PC-3 (cell line): ENCODE measurements at regions of chr5 and their contacts with region 1.

Region 1: DNA sequence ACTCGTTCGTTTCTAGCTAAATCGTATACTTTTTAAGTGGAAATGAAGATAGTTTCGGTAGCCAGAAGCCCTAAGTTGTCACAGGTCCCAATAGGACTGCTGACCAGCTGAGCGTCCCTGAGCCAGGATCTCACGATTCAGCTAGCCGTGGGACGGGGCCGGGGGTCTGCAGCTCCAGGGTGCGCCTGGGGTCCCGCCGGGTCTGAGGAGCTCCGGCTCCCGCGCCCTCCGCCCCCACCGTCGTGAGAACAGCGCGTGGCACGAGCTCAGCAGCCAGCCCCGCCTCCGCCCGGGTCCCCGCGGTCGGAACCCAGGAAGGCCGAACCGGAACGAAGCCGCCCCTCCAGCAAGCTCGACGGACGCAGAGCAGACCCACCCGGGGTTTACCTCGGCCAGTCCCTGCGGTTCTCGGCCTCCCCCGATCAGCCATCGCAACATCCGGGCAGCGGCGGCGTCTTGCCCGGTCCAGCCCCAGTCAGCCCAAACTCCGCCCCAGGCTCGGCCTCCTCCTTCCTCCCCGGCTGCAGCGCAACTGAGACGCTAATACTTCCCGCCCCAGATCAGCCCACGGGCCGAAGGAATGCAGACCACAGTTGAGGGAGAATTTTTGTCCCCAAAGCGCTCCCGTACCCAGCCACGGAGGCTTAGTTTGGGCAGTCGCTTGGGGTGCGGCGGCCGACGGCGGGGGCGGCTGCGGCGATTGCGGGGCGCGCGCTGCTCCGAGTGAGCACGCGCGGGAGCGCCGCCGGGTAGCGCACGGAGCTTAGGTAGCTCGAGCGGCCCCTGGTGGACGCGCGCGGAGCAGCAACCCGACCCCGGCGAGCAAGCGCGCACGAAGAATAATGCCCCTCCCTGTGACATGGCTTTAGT is at the start of gene WDR41:
- DNase-seq: peak; percentile 77
- ATAC-seq: peak; percentile 95
- H3K4me3 ChIP-seq: peak within 1 kb of the TSS; percentile 81
- H3K27ac ChIP-seq: peak within 1 kb of the TSS; percentile 57
- H3K4me1 ChIP-seq: peaks cover 6% of the 10 kb centered on the region; the same call in 1 of the 2 replicates
- H3K27me3 ChIP-seq: no peaks in the 10 kb centered on the region
- CTCF ChIP-seq: peak; percentile 74
- total RNA-seq, gene WDR41: 13.5 and 19.5 TPM in 2 replicates

Region 2: DNA sequence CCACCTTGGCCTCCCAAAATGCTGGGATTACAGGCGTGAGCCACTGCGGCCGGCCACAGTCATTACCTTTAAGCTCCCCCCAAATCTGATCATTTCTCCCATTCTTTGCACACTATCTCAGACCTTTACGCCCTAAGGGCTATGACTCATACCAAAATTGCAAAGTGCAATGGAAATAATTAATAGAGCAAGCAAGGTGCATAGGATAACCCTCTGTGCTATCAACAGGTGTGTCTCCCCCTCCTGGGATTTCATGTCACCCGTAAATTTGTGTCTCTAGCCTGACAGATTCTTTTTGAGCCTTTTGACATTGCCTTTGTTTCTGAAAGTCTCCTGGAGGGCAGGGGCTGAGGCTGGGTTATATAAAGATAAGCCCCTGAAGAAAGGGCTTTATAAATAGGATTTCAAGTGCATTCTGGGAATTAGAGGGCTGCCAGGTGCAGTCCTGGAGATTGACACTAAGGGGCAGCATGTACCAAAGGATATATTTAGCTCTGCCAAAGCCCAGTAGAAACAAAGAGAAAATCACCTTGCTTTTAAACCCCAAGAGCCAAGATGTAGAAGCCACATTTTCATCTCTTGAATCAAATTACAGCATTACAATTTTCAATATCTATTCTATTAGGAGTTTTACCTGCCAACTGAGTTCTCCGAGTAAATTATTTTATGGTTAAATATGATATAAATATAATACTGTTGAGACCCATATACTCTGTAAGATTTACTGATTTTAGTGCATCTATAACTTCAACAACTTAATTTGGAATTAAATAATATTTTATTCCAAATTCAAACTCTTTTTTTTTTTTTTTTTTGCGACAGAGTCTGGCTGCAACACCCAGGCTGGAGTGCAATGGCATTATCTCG is 624.0 kb before region 1 on chr5:
- CTCF ChIA-PET with region 1: no interaction called
- POLR2A ChIA-PET with region 1: no interaction called
- intact Hi-C with region 1: loop called (anchors 5 kb)
- DNase-seq: peak; percentile 75
- ATAC-seq: peak; percentile 61
- H3K4me3 ChIP-seq: no peak overlapping the region
- H3K27ac ChIP-seq: no peak overlapping the region
- H3K4me1 ChIP-seq: no peaks in the 10 kb centered on the region
- H3K27me3 ChIP-seq: no peaks in the 10 kb centered on the region
- CTCF ChIP-seq: peak; percentile 72

Region 3: DNA sequence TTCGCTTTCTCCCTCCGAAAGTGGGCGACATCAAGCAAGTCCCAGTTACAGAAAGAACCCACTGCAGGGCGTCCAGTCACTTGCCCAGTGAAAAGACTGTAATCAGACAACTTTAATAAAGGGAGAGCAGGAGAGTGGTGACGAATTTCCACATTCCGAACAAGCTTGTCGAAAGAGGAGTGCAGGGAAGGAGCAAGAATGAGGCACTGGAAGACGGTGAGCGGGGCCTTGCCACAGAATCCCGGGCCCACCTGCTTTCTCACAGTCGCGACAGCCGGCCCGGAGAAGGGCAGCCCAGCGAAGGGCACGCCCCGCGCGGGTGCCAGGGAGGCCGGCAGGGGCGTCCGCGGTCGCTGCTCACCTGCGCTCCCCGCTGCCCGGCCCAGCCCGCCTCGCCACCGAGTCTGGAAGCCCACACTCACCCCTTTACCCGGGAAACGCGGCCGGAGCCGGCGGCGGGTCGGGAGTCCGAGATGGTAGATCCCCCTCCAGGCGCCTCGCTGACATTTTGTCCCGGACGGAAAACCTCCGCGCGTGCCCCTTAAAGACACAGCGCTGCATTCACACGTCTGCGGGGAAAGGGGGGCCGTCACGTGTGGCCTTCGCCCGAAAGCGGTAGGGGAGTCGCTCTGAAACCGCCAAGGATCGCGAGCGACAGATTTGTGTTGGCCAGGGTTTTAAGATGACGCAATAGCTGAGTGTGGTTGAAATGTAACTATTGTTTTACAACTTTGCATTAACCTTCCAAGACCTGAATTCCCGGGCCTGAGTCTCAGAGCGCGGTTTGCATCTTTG is 405.1 kb before region 1 on chr5 and contains the start of gene ZBED3:
- CTCF ChIA-PET with region 1: no interaction called
- POLR2A ChIA-PET with region 1: no interaction called
- intact Hi-C with region 1: loop called (anchors 5 kb)
- DNase-seq: peak; percentile 64
- ATAC-seq: peak; percentile 78
- H3K4me3 ChIP-seq: peak within 1 kb of the TSS; percentile 93
- H3K27ac ChIP-seq: peak within 1 kb of the TSS; percentile 77
- H3K4me1 ChIP-seq: peaks cover 24% of the 10 kb centered on the region
- H3K27me3 ChIP-seq: no peaks in the 10 kb centered on the region
- CTCF ChIP-seq: 0 out of 2 replicates have a peak, but pooled peaks have one; percentile 12
- total RNA-seq, gene ZBED3: 1.3 and 9.8 TPM in 2 replicates

Region 4: GRCh38 chr5:77143998-77144836 is 347.8 kb before region 1 on chr5:
- CTCF ChIA-PET with region 1: interaction called, 4 read pairs
- POLR2A ChIA-PET with region 1: interaction called, 3 read pairs
- intact Hi-C with region 1: loop called (anchors 1 kb)
- DNase-seq: peak; percentile 65
- ATAC-seq: peak; percentile 57
- H3K4me3 ChIP-seq: no peak overlapping the region
- H3K27ac ChIP-seq: no peak overlapping the region
- H3K4me1 ChIP-seq: peaks cover 9% of the 10 kb centered on the region
- H3K27me3 ChIP-seq: no peaks in the 10 kb centered on the region
- CTCF ChIP-seq: peak; percentile 78

Region 5: DNA sequence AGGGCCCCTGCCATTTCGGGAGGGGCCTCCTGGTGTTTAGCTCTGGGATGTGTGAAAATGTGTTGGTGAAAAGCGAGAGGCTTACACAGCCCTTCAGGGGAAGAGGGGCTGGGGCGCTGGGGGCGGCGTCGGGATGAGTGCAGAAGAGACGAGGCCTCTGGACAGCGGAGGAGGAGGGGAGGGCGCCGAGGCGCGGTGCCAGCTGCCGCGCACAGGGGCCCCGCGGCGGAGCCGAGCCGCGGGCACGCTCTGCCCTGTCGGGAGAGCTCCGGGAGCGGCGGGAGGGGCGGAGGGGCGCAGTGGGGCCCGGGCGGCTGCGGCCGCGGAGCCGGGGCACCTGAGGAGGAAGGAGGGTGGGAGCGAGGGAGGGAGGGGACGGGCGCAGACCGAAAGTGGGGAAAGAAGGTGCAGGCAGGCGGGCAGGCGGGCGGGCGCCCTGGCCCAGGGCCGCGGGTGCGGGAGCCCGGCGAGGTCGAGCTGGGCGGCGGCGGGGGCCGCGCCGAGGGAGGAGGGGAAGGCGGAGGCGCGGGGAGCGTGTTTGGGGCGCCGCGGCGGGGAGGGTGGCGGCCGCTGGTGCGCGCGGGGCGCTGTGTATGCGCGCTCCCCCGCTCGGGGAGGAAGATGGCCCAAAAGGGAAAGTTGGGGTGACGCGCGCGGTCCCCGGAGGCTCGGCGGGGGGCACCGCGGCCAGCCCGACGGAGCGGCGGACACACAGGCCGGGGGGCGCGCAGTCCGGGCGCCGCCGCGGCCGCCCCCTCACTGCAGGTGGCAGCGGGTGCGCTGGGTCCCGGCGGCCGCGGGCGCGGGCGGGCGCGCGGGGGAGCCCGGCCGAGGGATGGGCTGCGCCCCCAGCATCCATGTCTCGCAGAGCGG is 281.7 kb before region 1 on chr5 and contains the start of gene PDE8B:
- CTCF ChIA-PET with region 1: no interaction called
- POLR2A ChIA-PET with region 1: no interaction called
- intact Hi-C with region 1: loop called (anchors 5 kb)
- DNase-seq: no peak
- ATAC-seq: no peak
- H3K4me3 ChIP-seq: peak within 1 kb of the TSS; percentile 75
- H3K27ac ChIP-seq: no peak within 1 kb of the TSS
- H3K4me1 ChIP-seq: peaks cover 4% of the 10 kb centered on the region; the same call in 1 of the 2 replicates
- H3K27me3 ChIP-seq: peaks cover 22% of the 10 kb centered on the region
- CTCF ChIP-seq: no peak
- total RNA-seq, gene PDE8B: 0.12 TPM in 1 of 2 replicates, not detected in the other

Region 6: GRCh38 chr5:77431286-77431685 is 60.7 kb before region 1 on chr5:
- CTCF ChIA-PET with region 1: no interaction called
- POLR2A ChIA-PET with region 1: no interaction called
- intact Hi-C with region 1: loop called (anchors 2 kb)
- DNase-seq: peak; percentile 85
- ATAC-seq: peak; percentile 86
- H3K4me3 ChIP-seq: no peak overlapping the region
- H3K27ac ChIP-seq: peak overlapping the region; percentile 44; the same call in 1 of the 2 replicates
- H3K4me1 ChIP-seq: peaks cover 39% of the 10 kb centered on the region
- H3K27me3 ChIP-seq: no peaks in the 10 kb centered on the region
- CTCF ChIP-seq: no peak

Region 7: GRCh38 chr5:78430866-78431265 is 938.8 kb after region 1 on chr5:
- CTCF ChIA-PET with region 1: no interaction called
- POLR2A ChIA-PET with region 1: no interaction called
- intact Hi-C with region 1: no loop called
- DNase-seq: no peak
- ATAC-seq: no peak
- H3K4me3 ChIP-seq: no peak overlapping the region
- H3K27ac ChIP-seq: no peak overlapping the region
- H3K4me1 ChIP-seq: no peaks in the 10 kb centered on the region
- H3K27me3 ChIP-seq: no peaks in the 10 kb centered on the region
- CTCF ChIP-seq: no peak